Mammary epithelial cell (primary cell): ENCODE measurements at regions of chr10 and their contacts with region 1.

Region 1: GRCh38 chr10:23994479-23995046 is 214.4 kb upstream of the KIAA1217 start:
- DNase-seq: peak; percentile 25
- H3K4me3 ChIP-seq: no peak overlapping the region
- H3K27ac ChIP-seq: no peak overlapping the region
- H3K4me1 ChIP-seq: no peaks in the 10 kb centered on the region
- H3K27me3 ChIP-seq: peaks cover 3% of the 10 kb centered on the region
- CTCF ChIP-seq: peak; percentile 91 to 93

Region 2: DNA sequence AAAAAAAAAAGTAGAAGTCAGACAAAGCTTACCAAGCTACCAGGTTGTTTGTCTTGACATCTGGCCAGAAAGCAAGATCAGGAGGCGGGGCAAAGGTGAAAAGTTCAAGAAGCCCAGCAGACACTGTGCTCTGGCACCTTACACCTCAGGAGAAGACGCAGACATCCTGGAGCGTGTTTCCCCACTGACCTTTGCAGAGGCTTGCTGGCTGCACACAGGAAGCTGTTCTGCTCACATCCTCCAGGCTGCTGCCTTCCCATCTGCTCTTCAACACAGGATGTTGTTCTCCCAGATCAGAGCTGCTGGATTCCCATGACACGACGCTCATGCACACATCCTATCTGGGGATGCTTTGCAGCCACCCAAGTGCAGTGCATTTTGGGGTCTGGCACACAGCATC is 40.0 kb after region 1 on chr10:
- CTCF ChIA-PET with region 1: no interaction called
- dilution Hi-C with region 1: no loop called
- in situ Hi-C with region 1: no loop called
- intact Hi-C with region 1: no loop called
- DNase-seq: no peak
- H3K4me3 ChIP-seq: no peak overlapping the region
- H3K27ac ChIP-seq: no peak overlapping the region
- H3K4me1 ChIP-seq: no peaks in the 10 kb centered on the region
- H3K27me3 ChIP-seq: peaks cover 5% of the 10 kb centered on the region
- CTCF ChIP-seq: no peak

Region 3: DNA sequence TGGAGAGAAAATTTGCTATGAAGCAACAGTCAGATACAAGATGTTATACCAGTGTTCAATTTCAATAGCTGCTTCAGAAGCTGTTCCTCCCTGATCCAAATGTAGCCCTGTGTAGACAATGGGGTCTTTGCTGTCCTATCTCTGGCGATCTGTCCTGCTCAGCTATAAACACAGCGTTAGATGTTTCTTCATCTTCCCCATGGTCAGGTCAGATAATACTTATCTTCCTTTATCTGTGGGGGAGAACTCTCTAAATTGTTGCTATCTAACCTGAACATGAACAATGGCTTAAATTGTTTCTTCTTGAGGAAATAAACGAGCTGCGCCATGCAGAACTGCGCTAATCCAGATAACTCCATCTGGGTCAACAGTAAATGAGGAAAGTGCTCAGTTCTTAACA is 198.8 kb after region 1 on chr10:
- CTCF ChIA-PET with region 1: interaction called, 3 read pairs
- dilution Hi-C with region 1: no loop called
- in situ Hi-C with region 1: loop called (anchors 5 to 25 kb)
- intact Hi-C with region 1: loop called (anchors 1 kb)
- DNase-seq: no peak
- H3K4me3 ChIP-seq: no peak overlapping the region
- H3K27ac ChIP-seq: no peak overlapping the region
- H3K4me1 ChIP-seq: no peaks in the 10 kb centered on the region
- H3K27me3 ChIP-seq: no peaks in the 10 kb centered on the region
- CTCF ChIP-seq: no peak

Region 4: DNA sequence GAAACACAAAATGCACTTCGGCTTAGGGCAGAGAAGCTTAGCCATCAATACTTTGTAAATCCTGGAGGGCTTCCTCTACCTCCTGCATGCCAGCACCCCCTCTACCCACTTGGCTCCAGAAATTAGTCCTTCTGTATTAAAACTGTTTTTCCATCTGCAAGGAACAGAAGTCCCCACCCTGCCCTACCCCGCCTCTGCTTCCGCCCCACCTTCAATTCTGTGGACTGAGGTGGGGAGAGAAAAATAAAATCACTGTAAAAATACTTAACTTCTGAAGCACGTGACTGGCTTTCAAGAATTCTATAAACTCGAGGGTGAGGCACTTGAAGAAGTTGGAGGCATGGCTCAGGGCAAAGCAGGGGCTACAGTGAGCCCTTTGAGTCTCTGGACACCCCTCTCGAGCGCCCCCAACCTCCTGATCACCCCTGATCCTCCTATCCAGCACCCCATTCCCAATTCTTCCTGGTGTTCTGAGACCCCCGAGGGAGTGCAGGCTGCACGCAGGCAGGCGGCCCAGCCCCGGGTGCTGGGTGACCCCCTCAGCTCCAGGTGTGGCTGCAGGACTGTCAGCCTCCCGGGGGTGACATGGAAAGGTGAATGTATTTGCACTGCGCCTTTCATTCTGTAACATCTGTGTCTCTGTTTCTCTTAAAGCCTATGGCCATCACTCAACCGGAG is 207.1 kb after region 1 on chr10:
- CTCF ChIA-PET with region 1: interaction called, 3 read pairs
- dilution Hi-C with region 1: no loop called
- in situ Hi-C with region 1: loop called in 1 of 2 experiments (anchors 25 kb)
- intact Hi-C with region 1: loop called (anchors 1 kb)
- DNase-seq: no peak
- H3K4me3 ChIP-seq: no peak overlapping the region
- H3K27ac ChIP-seq: no peak overlapping the region
- H3K4me1 ChIP-seq: no peaks in the 10 kb centered on the region
- H3K27me3 ChIP-seq: no peaks in the 10 kb centered on the region
- CTCF ChIP-seq: no peak

Region 5: DNA sequence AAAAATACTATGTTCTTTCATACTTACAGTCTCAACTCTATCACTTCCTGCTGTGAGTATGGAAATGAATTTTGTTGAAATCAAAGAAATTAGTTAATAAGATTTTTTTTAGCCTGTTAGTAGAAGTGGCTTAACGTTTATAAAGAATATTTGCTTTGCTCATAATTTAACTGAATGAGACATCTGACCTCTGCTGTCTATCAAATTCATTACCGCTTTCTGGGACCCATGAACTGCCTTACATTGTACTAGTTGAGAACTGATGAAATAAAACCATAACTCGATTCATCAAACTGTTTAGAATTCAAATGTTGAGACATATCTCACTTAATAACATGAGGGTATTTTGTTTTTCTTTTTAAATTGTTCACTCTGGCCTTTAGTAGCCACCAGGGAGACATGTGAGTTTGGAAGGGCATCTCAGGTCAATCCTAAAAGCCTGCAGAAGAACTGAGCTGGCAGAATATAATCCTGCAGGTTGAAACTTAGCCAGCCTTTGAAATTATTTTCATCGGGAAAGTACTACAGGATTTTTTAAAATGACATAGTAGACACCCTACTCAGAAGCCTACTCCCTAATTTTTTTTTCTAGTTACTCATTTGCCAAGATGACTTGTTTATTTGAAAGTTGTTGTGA is 293.1 kb after region 1 on chr10:
- CTCF ChIA-PET with region 1: no interaction called
- dilution Hi-C with region 1: no loop called
- in situ Hi-C with region 1: no loop called
- intact Hi-C with region 1: loop called (anchors 10 kb)
- DNase-seq: no peak
- H3K4me3 ChIP-seq: no peak overlapping the region
- H3K27ac ChIP-seq: no peak overlapping the region
- H3K4me1 ChIP-seq: peaks cover 14% of the 10 kb centered on the region
- H3K27me3 ChIP-seq: no peaks in the 10 kb centered on the region
- CTCF ChIP-seq: peak in 1 of 2 donors; percentile 20

Region 6: DNA sequence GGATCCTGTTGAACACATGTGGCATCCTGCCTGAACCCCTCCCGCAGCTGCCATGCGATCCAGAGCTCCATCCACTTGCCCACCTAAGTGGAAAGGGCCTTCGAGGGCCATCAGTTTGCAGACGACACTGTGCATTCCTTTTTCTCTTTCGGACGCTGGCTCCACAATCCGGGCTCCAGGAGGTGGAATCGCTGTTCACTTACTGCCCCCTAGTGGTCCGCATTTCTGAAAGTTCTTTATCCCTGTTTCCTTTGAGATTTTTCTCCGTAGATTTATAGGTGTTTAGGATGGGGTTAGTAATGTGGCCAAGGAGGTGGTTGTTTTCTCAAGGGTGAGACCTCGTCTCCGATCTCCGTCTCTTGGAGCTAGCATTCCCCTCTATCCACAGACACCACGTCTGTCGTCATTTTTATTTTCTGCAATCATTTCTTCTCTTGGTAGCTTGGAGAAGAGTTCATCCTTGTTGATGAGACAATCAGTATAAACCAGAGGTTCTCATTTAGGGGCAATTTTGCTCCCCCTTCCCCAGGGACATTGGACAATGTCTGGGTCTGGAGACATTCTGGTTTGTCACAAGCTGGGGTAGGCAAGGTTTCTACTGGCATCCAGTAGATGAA is 524.5 kb after region 1 on chr10:
- CTCF ChIA-PET with region 1: no interaction called
- dilution Hi-C with region 1: no loop called
- in situ Hi-C with region 1: loop called (anchors 10 to 25 kb)
- intact Hi-C with region 1: loop called (anchors 1 kb)
- DNase-seq: peak; percentile 36
- H3K4me3 ChIP-seq: no peak overlapping the region
- H3K27ac ChIP-seq: no peak overlapping the region
- H3K4me1 ChIP-seq: peaks cover 3% of the 10 kb centered on the region
- H3K27me3 ChIP-seq: no peaks in the 10 kb centered on the region
- CTCF ChIP-seq: peak; percentile 79 to 80

Region 7: GRCh38 chr10:24556750-24557742 is 562.5 kb after region 1 on chr10:
- CTCF ChIA-PET with region 1: interaction called, 3 read pairs
- dilution Hi-C with region 1: no loop called
- in situ Hi-C with region 1: loop called in 1 of 2 experiments (anchors 10 kb)
- intact Hi-C with region 1: loop called (anchors 1 kb)
- DNase-seq: peak; percentile 46
- H3K4me3 ChIP-seq: no peak overlapping the region
- H3K27ac ChIP-seq: no peak overlapping the region
- H3K4me1 ChIP-seq: peaks cover 16% of the 10 kb centered on the region
- H3K27me3 ChIP-seq: no peaks in the 10 kb centered on the region
- CTCF ChIP-seq: peak; percentile 72 to 75